Activated naive CD4-positive, alpha-beta T cell treated with anti-CD3 and anti-CD28 coated beads for 36 hours (primary cell): ENCODE measurements at regions of chr17 and their contacts with region 1.

Region 1: DNA sequence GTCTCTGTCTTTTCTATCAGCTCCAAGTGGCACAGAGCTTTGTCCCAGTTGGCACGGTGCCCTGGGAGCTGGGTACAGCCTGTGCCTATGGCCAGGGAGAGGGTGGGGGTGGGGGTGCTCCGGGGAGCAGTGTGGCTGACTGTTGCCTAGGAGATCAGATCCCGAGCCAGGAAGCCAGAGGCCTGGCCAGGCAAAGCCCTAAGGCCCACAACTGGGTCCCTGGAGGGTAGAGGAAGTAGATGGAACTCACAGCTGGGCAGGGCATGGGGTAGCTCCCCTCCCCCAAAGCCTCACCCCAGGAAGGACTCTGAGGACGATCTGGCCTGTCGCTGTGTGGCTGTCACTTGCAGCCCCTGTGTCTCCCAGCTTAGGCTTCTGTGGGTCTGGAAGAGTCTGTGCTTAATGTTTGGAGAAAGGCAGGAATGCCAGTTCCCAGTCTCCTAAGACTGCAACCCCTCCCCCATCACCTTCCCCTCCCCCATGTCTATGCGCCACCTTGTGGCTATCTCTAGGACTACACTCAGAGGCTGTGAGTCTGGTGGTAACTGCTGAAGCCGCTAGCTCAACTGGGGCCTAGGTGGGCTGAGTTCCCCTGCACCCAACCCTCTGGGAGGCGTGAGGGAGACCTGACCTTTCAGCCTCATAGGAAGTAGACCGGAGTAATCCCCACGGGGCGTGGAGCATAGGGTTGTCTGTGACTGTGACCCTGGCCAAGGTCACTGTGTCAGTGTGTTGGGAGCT is 12.6 kb downstream of the THRA start:
- DNase-seq: peak; percentile 80
- H3K4me3 Mint-ChIP-seq: no peak overlapping the region
- H3K27ac Mint-ChIP-seq: no peak overlapping the region
- H3K4me1 Mint-ChIP-seq: peaks cover 36% of the 10 kb centered on the region
- H3K27me3 Mint-ChIP-seq: no peaks in the 10 kb centered on the region

Region 2: DNA sequence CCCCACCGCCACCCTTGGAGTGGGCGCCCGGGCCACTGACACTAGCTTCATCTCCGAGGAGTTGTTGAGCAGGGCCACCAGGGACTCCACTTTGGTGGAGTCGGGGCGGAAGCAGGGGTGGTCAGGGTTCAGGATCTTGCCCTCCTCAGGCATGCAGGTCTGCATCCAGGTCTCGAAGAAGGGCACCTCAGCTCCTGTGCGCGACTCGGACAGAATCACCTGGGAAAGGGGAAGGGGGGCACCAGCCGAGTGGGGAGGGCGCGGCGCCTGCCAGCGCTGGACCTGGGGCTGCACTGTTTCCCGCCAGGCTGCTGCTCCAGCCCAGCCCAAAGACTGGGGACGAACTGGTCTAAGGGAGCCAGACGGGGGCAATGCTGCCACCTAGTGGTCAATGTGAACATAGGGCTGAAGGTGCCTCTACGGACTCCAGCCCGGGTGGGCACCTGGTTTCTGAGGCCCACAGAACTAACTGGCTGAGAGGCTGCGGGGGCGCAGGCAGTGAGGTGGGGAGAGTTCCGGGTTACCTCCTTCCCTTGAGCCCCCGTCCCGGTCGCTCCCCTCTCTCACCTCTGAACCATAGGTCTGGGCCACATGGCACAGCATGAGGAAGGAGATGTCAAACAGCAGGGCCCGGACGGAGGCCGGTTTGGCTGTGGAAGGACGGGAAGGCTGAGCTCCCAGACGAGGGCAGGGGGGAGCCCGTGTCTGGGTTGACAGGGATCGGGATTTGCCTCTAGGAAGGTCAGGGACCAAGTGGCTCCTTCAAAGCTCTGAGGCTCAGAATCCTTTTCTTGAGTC is 48.4 kb before region 1 on chr17:
- CTCF ChIA-PET with region 1: interaction called, 11 read pairs
- intact Hi-C with region 1: no loop called
- DNase-seq: peak; percentile 85
- H3K4me3 Mint-ChIP-seq: no peak overlapping the region
- H3K27ac Mint-ChIP-seq: no peak overlapping the region
- H3K4me1 Mint-ChIP-seq: peaks cover 17% of the 10 kb centered on the region
- H3K27me3 Mint-ChIP-seq: no peaks in the 10 kb centered on the region

Region 3: DNA sequence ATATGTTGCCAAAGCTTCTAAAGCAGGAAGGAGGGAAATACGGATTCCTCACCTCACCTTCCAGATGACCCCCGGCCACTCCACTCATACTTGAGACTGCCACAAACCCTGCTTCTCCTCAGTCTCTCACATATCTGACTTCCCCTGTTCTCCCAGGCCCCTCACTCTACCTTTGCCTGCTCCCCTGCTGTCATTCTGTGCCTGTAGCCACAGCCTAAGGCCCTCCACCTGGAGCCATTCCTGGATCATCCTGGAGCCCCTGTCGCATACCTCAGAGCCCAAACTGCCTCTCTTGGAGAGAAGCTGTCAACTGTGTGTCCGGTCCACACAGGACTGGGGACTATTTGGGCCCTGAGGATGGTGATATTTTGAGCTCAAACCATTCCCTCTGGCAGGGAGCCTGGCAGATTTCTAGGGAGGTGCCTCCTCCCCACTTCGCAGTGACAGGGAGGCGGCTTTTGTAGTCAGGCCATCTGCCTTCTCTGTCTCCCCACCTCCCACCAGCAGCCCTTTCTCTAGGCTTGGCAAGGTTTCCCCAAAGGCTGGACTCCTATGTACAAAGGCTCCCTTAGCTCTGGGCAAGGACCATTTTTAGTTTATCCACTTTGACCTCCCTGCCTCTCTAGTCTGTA is 18.9 kb before region 1 on chr17:
- CTCF ChIA-PET with region 1: interaction called, 157 read pairs
- intact Hi-C with region 1: no loop called
- DNase-seq: no peak
- H3K4me3 Mint-ChIP-seq: no peak overlapping the region
- H3K27ac Mint-ChIP-seq: no peak overlapping the region
- H3K4me1 Mint-ChIP-seq: peaks cover 15% of the 10 kb centered on the region
- H3K27me3 Mint-ChIP-seq: peaks cover 1% of the 10 kb centered on the region

Region 4: DNA sequence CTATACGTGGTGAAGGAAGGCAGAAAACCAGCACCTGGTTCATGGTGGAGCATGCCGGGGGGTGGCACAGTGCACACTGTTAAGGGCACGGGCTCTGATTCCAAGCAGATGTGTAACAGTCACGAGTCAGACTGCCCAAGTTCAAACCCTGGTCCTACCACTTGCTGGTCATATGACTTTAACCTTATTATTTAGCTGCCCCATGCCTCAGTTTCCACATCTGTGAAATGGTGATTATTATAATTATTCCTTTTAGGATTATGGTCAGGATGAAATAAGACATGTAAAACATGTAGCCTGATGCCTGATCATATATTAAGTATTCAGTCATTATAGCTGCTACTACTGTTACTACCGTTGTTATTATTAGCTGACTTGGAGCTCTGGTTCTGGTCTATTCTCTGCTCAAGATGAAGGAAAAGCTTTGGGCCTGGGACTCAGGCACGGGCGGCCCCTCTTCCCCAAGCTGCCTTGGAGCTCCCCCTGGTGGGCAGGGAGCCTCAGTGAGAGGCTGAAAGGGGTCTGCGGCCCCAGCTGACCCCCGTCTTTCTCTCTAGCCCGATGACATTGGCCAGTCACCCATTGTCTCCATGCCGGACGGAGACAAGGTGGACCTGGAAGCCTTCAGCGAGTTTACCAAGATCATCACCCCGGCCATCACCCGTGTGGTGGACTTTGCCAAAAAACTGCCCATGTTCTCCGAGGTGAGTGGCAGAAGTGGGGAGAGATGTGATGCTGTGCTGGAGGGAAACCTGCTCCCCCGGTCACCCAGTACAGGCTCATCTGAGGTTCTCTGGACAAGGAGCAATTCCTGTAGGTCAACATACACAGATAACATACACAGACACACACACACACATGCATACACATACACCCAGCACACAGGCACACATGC is 11.0 kb after region 1 on chr17:
- CTCF ChIA-PET with region 1: interaction called, 52 read pairs
- intact Hi-C with region 1: no loop called
- DNase-seq: peak; percentile 67
- H3K4me3 Mint-ChIP-seq: no peak overlapping the region
- H3K27ac Mint-ChIP-seq: no peak overlapping the region
- H3K4me1 Mint-ChIP-seq: no peaks in the 10 kb centered on the region
- H3K27me3 Mint-ChIP-seq: no peaks in the 10 kb centered on the region

Region 5: DNA sequence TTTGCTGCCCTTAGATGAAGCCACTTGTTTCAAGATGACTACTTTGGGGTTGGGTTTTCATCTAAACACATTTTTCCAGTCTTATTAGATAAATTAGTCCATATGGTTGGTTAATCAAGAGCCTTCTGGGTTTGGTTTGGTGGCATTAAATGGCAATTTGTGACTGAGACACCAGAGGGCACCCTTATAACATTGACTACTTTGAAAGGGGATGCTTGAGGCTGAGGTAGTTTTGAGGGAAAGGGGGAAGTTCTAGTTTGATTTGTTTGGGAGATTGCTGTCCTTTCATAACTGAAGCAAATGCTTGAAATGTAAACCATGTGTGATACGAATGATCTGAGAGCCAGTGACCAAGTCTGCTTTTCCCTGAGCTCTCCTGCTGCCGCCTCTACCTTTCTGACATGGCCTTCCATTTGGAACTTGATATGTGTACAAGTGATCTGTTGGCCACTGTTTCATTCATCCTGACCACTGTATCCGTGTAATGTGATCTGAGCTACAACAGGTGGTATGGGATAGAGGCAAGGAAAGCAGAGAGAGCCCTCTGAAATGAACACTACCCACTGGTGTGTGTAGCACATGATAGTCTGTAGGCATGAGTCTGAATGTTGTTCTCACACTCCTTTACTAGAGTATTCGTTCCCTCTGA is 227.8 kb after region 1 on chr17:
- CTCF ChIA-PET with region 1: no interaction called
- intact Hi-C with region 1: no loop called
- DNase-seq: peak; percentile 61
- H3K4me3 Mint-ChIP-seq: no peak overlapping the region
- H3K27ac Mint-ChIP-seq: no peak overlapping the region
- H3K4me1 Mint-ChIP-seq: peaks cover 10% of the 10 kb centered on the region
- H3K27me3 Mint-ChIP-seq: no peaks in the 10 kb centered on the region